ENCODE measurements at regions of chr2 and their contacts with region 1.

Region 1: DNA sequence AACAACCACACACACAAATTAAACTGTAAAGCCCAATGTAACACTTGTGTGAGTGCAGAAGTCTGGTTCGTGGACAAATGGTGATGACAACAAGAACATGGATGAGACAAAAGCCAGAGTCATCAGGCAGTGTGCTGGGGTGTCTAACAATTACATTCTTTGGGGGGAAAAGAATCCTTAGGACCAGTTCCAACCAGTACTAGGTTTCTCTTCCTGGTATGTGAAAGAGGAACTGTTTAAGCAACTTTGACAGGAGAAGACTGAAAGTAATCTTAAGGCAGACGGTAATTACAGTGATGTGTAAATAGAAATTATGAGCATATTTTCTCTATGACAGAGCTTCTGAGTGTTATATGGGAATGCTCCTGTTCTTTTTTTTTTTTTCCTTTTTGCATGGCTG is 133.4 kb downstream of the AFF3 start:
- DNase-seq: no peak
- ATAC-seq: no peak
- H3K4me3 ChIP-seq: no peak overlapping the region
- H3K27ac ChIP-seq: no peak overlapping the region
- H3K4me1 ChIP-seq: peaks cover 19% of the 10 kb centered on the region
- H3K27me3 ChIP-seq: no peaks in the 10 kb centered on the region
- CTCF ChIP-seq: no peak

Region 2: GRCh38 chr2:99957332-99958133 is 51.4 kb before region 1 on chr2:
- CTCF ChIA-PET with region 1: no interaction called
- POLR2A ChIA-PET with region 1: no interaction called
- intact Hi-C with region 1: loop called (anchors 10 kb)
- DNase-seq: no peak
- ATAC-seq: no peak
- H3K4me3 ChIP-seq: no peak overlapping the region
- H3K27ac ChIP-seq: no peak overlapping the region
- H3K4me1 ChIP-seq: no peaks in the 10 kb centered on the region
- H3K27me3 ChIP-seq: no peaks in the 10 kb centered on the region
- CTCF ChIP-seq: no peak

Region 3: GRCh38 chr2:100757621-100758394 is 748.9 kb after region 1 on chr2:
- CTCF ChIA-PET with region 1: no interaction called
- POLR2A ChIA-PET with region 1: no interaction called
- intact Hi-C with region 1: no loop called
- DNase-seq: peak; percentile 94
- ATAC-seq: peak; percentile 60
- H3K4me3 ChIP-seq: no peak overlapping the region
- H3K27ac ChIP-seq: peak overlapping the region; percentile 87
- H3K4me1 ChIP-seq: peaks cover 71% of the 10 kb centered on the region
- H3K27me3 ChIP-seq: no peaks in the 10 kb centered on the region
- CTCF ChIP-seq: no peak